ENCODE measurements at regions of chr5 and their contacts with region 1.

Region 1: GRCh38 chr5:128201065-128201926 is 117.7 kb downstream of the SLC12A2 start:
- DNase-seq: peak; percentile 82 to 92
- ATAC-seq: peak; percentile 90
- H3K4me3 ChIP-seq: no peak overlapping the region
- H3K27ac ChIP-seq: no peak overlapping the region
- H3K4me1 ChIP-seq: no peaks in the 10 kb centered on the region
- H3K27me3 ChIP-seq: no peaks in the 10 kb centered on the region

Region 2: GRCh38 chr5:127564002-127564769 is 637.1 kb before region 1 on chr5:
- intact Hi-C with region 1: loop called (anchors 2 to 5 kb)
- DNase-seq: no peak
- ATAC-seq: peak; percentile 74
- H3K4me3 ChIP-seq: no peak overlapping the region
- H3K27ac ChIP-seq: no peak overlapping the region
- H3K4me1 ChIP-seq: no peaks in the 10 kb centered on the region
- H3K27me3 ChIP-seq: no peaks in the 10 kb centered on the region

Region 3: DNA sequence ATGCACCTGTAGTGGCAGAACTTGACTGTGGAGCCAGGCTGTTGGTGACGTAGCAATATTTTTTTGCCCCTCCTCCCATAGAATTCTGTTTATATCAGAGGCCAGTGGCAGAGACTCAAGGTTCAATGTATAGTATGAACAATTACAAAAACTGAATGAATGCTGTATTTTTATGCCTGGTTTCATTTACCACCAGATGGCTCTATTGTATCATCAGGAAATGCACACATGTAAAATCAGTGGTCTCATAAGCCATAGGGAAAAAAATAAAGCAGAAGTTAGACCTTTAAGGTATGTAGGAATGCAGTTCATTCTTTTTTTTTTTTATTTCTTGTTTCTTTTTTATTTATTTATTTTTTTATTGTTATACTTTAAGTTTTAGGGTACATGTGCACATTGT is 454.5 kb before region 1 on chr5:
- intact Hi-C with region 1: loop called (anchors 5 kb)
- DNase-seq: no peak
- ATAC-seq: no peak
- H3K4me3 ChIP-seq: no peak overlapping the region
- H3K27ac ChIP-seq: no peak overlapping the region
- H3K4me1 ChIP-seq: no peaks in the 10 kb centered on the region
- H3K27me3 ChIP-seq: no peaks in the 10 kb centered on the region

Region 4: GRCh38 chr5:127757576-127757975 is 443.7 kb before region 1 on chr5:
- intact Hi-C with region 1: loop called in 1 of 2 experiments (anchors 5 kb)
- DNase-seq: no peak
- ATAC-seq: no peak
- H3K4me3 ChIP-seq: no peak overlapping the region
- H3K27ac ChIP-seq: no peak overlapping the region
- H3K4me1 ChIP-seq: no peaks in the 10 kb centered on the region
- H3K27me3 ChIP-seq: no peaks in the 10 kb centered on the region

Region 5: GRCh38 chr5:128241051-128241695 is 39.9 kb after region 1 on chr5:
- intact Hi-C with region 1: no loop called
- DNase-seq: no peak
- ATAC-seq: no peak
- H3K4me3 ChIP-seq: no peak overlapping the region
- H3K27ac ChIP-seq: no peak overlapping the region
- H3K4me1 ChIP-seq: no peaks in the 10 kb centered on the region
- H3K27me3 ChIP-seq: peaks cover 0 to 1% of the 10 kb centered on the region in 2 donors

Measured in aorta (tissue), 5 donors.